Tibial artery (tissue), 4 donors: ENCODE measurements at regions of chr15 and their contacts with region 1.

Region 1: GRCh38 chr15:74781431-74782258 is at the start of gene CSK:
- DNase-seq: peak; percentile 58 to 82
- H3K4me3 ChIP-seq: peak within 1 kb of the TSS; percentile 83 to 89
- H3K27ac ChIP-seq: peak within 1 kb of the TSS; percentile 74 to 79
- H3K4me1 ChIP-seq: peaks cover 0 to 62% (median 46%) of the 10 kb centered on the region in 4 donors
- H3K27me3 ChIP-seq: no peaks in the 10 kb centered on the region
- CTCF ChIP-seq: peak; percentile 49 to 87

Region 2: DNA sequence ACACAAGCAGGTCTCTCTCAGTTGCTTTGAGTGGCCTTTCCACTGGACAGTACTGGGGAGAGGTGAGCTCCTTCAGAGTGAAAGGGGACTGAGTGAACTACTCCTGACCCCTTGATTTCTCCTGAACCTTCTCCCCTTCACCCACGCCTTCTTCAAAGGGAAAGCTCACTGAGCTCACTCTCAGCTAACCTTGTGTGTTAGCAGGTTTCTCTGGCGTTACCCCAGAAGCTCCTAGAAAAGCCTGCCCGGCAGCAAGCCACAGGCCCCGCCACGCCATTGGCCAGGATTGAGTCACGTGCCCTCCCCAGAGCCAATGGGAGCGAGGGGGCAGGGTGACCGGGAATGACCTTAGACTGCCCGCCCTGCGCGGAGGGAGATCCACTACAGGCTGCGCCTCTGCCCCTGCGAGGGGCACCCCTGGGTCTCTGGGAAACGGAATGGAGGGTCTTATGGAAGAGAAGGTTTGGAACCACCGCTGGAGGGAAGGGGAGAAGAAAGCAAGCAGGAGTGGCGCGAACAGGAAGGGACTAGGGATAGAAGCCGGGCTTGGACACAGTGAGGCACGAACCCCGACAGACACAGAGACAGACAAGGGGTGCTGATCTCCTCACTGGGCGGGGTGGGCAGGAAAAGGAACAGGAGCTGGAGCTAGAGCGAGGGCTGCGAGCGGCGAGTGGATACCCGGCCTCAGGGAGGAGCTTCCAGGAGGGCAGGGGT is 183.4 kb before region 1 on chr15:
- intact Hi-C with region 1: no loop called
- DNase-seq: peak; percentile 93 to 96
- H3K4me3 ChIP-seq: peak overlapping the region; percentile 61 to 70
- H3K27ac ChIP-seq: peak overlapping the region; percentile 74 to 93
- H3K4me1 ChIP-seq: peaks cover 0 to 19% (median 8%) of the 10 kb centered on the region in 4 donors
- H3K27me3 ChIP-seq: no peaks in the 10 kb centered on the region
- CTCF ChIP-seq: no peak

Region 3: GRCh38 chr15:74906446-74907162 is 125.0 kb after region 1 on chr15 and contains the start of gene FAM219B:
- intact Hi-C with region 1: loop called (anchors 5 kb)
- DNase-seq: peak; percentile 93 to 96
- H3K4me3 ChIP-seq: peak within 1 kb of the TSS; percentile 92 to 94
- H3K27ac ChIP-seq: peak within 1 kb of the TSS; percentile 95 to 97
- H3K4me1 ChIP-seq: peaks cover 5 to 30% (median 20%) of the 10 kb centered on the region in 4 donors
- H3K27me3 ChIP-seq: no peaks in the 10 kb centered on the region
- CTCF ChIP-seq: no peak

Region 4: GRCh38 chr15:74937596-74938296 is 156.1 kb after region 1 on chr15 and contains the start of gene COX5A:
- intact Hi-C with region 1: loop called (anchors 5 kb)
- DNase-seq: peak; percentile 96 to 97
- H3K4me3 ChIP-seq: peak within 1 kb of the TSS; percentile 95 to 100
- H3K27ac ChIP-seq: peak within 1 kb of the TSS; percentile 98
- H3K4me1 ChIP-seq: peaks cover 0 to 30% (median 14%) of the 10 kb centered on the region in 4 donors
- H3K27me3 ChIP-seq: no peaks in the 10 kb centered on the region
- CTCF ChIP-seq: peak in 1 of 2 experiments; percentile 19

Region 5: DNA sequence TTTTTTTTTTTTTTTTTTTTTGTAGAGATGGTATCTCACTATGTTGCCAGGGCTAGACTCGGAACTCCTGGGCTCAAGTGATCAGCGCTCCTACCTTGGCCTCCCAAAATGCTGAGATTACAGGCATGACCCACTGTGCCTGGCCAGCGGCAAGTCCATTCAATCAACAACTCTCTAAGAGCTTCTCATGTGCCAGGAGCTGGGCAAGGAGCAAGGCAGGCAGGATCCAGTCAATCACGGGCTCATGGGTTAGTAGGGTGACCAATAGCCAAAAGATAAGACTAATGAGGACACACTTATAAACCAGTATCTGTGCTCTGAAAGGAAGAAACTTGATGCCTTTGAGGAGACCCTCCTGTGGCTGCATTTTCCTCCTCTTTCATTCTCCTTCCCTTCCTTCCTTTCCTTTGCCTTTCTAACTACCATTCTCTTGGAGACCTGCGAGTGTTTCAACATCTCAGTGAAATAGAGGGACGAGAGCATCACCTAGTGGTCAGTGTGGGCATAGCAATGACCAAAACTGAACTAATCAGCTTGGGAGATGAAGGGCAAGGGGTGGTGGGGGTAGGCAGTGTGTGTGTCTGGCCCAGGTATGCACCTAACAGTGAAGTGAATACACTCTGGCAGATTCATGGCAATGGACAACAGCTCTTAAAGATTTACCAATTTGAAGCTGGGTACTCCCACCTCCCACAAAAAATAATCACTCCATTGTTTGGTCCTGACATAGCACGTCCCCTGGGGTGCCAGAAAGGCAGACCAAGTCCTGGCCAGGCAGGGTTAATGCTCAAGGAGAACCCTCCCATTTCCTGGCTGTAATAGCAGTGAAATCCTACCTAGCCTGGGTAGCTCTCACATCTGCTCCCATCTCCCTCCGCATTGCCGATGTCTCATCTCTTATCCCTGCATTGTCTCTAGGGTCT is 168.7 kb after region 1 on chr15:
- intact Hi-C with region 1: loop called (anchors 5 kb)
- DNase-seq: peak; percentile 82 to 83
- H3K4me3 ChIP-seq: no peak overlapping the region
- H3K27ac ChIP-seq: no peak overlapping the region
- H3K4me1 ChIP-seq: peaks cover 0 to 18% (median 13%) of the 10 kb centered on the region in 4 donors
- H3K27me3 ChIP-seq: no peaks in the 10 kb centered on the region
- CTCF ChIP-seq: peak; percentile 95 to 99

Region 6: GRCh38 chr15:75201609-75202250 is 420.1 kb after region 1 on chr15 and contains the start of gene C15orf39:
- intact Hi-C with region 1: loop called (anchors 10 kb)
- DNase-seq: peak; percentile 48 to 85
- H3K4me3 ChIP-seq: peak within 1 kb of the TSS; percentile 86 to 97
- H3K27ac ChIP-seq: peak within 1 kb of the TSS; percentile 97 to 100
- H3K4me1 ChIP-seq: peaks cover 0 to 43% (median 37%) of the 10 kb centered on the region in 4 donors
- H3K27me3 ChIP-seq: no peaks in the 10 kb centered on the region
- CTCF ChIP-seq: peak; percentile 89 to 98